Transverse colon (tissue), 4 donors: ENCODE measurements at regions of chr2 and their contacts with region 1.

Region 1: GRCh38 chr2:104402825-104403224 is 451.1 kb upstream of the POU3F3 start:
- DNase-seq: no peak
- H3K4me3 ChIP-seq: no peak overlapping the region
- H3K27ac ChIP-seq: no peak overlapping the region
- H3K4me1 ChIP-seq: no peaks in the 10 kb centered on the region
- H3K27me3 ChIP-seq: no peaks in the 10 kb centered on the region
- CTCF ChIP-seq: no peak
- EP300 ChIP-seq: no peak
- POLR2A ChIP-seq: no peak

Region 2: GRCh38 chr2:104462731-104463130 is 59.9 kb after region 1 on chr2:
- in situ Hi-C with region 1: no loop called
- intact Hi-C with region 1: loop called (anchors 5 kb)
- DNase-seq: no peak
- H3K4me3 ChIP-seq: no peak overlapping the region
- H3K27ac ChIP-seq: no peak overlapping the region
- H3K4me1 ChIP-seq: no peaks in the 10 kb centered on the region
- H3K27me3 ChIP-seq: no peaks in the 10 kb centered on the region
- CTCF ChIP-seq: no peak
- EP300 ChIP-seq: no peak
- POLR2A ChIP-seq: no peak